Naive thymus-derived CD4-positive, alpha-beta T cell (primary cell): ENCODE measurements at regions of chr11 and their contacts with region 1.

Region 1: GRCh38 chr11:72430741-72431570 is 3.4 kb downstream of the CLPB start:
- DNase-seq: peak; percentile 16 to 61 (median 52)
- ATAC-seq: peak; percentile 25
- H3K4me3 ChIP-seq: no peak overlapping the region
- H3K4me3 Mint-ChIP-seq: peak overlapping the region in 9 of 10 donors; percentile 18 to 70 (median 57)
- H3K27ac ChIP-seq: no peak overlapping the region
- H3K27ac Mint-ChIP-seq: peak overlapping the region; percentile 6 to 84 (median 79)
- H3K4me1 ChIP-seq: peaks cover 12 to 13% of the 10 kb centered on the region in 2 donors
- H3K4me1 Mint-ChIP-seq: peaks cover 18 to 48% (median 40%) of the 10 kb centered on the region in 7 donors
- H3K27me3 ChIP-seq: no peaks in the 10 kb centered on the region
- H3K27me3 Mint-ChIP-seq: no peaks in the 10 kb centered on the region

Region 2: DNA sequence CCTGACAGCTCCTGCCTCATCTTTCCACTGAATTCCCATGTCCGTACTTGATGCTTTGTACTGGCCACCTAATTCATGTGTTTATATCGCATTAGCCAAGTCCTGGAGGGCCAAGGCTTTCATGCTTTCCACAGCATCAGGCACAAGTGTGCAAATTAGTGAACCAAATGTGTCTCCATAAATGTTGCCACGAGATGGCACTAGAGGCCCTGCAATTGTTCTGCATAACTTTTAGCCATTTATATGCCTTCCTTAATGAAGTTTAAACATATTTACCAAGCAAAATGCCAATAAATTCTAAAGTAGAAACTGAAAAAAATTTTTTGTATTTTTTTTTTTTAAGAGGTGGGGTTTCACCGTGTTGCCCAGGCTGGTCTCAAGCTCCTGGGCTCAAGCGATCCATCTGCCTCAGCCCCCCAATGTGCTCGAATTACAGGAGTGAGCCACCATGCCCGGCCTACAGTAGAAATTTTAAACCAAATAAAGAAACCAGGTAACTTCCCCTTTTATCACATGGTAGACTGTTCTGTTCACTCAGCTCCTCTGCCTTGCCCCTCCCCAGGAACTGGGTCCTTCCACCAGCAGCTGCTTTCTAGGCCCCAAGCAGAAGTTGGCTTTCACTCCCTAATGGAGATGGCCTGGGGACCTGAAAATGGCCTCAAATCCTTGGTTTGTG is 453.1 kb before region 1 on chr11:
- CTCF ChIA-PET with region 1: interaction called, 9 read pairs
- POLR2A ChIA-PET with region 1: no interaction called
- intact Hi-C with region 1: loop called (anchors 1 to 5 kb)
- DNase-seq: peak in 6 of 9 donors; percentile 44 to 55 (median 47)
- ATAC-seq: peak; percentile 74
- H3K4me3 ChIP-seq: no peak overlapping the region
- H3K4me3 Mint-ChIP-seq: no peak overlapping the region
- H3K27ac ChIP-seq: no peak overlapping the region
- H3K27ac Mint-ChIP-seq: no peak overlapping the region
- H3K4me1 ChIP-seq: no peaks in the 10 kb centered on the region
- H3K4me1 Mint-ChIP-seq: peaks cover 0 to 7% (median 0%) of the 10 kb centered on the region in 7 donors
- H3K27me3 ChIP-seq: no peaks in the 10 kb centered on the region
- H3K27me3 Mint-ChIP-seq: no peaks in the 10 kb centered on the region

Region 3: DNA sequence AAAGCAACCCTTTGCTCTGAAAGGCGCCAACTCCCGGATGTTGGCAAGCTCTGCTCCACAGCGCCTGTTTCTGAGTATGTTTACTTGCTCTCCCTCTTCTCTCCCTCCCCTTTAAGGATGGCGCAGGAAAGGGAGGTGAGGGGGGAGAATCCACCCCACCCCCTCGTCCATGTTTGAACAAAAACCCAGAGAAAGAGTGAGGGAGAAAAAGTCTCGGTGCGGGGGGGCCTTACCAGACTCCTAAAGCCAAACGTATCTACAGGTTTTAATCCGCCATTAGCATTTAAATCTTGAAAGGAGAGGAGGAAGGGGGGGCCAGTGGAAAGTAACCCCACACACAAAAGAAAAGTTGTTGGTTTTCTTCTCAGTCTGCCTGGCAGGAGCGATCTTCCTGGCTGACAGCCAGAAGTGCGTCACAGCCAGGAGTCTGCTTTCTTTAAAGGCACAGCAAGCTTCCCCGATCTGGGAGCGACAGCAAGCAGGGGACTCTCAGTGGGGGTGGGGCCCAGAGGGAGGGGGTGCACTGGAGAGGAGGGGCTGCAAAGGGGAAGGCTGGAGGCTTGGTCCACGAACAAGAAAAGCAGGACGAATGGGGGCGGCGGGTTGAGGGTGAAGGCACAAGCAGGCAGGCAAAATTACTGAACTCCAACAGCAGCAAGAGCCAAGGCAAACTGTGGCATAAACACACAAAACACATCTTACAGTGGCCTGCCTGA is 390.1 kb before region 1 on chr11:
- CTCF ChIA-PET with region 1: no interaction called
- POLR2A ChIA-PET with region 1: no interaction called
- intact Hi-C with region 1: loop called in 1 of 2 experiments (anchors 1 kb)
- DNase-seq: peak; percentile 51 to 91 (median 86)
- ATAC-seq: peak; percentile 84
- H3K4me3 ChIP-seq: peak overlapping the region; percentile 89
- H3K4me3 Mint-ChIP-seq: no peak overlapping the region
- H3K27ac ChIP-seq: peak overlapping the region; percentile 88
- H3K27ac Mint-ChIP-seq: no peak overlapping the region
- H3K4me1 ChIP-seq: peaks cover 48 to 57% of the 10 kb centered on the region in 2 donors
- H3K4me1 Mint-ChIP-seq: peaks cover 19 to 53% (median 41%) of the 10 kb centered on the region in 7 donors
- H3K27me3 ChIP-seq: no peaks in the 10 kb centered on the region
- H3K27me3 Mint-ChIP-seq: no peaks in the 10 kb centered on the region

Region 4: GRCh38 chr11:72112321-72113219 is 318.4 kb before region 1 on chr11 and contains the start of gene ANAPC15:
- CTCF ChIA-PET with region 1: no interaction called
- POLR2A ChIA-PET with region 1: interaction called, 3 read pairs
- intact Hi-C with region 1: loop called (anchors 1 kb)
- DNase-seq: peak; percentile 83 to 100 (median 99)
- ATAC-seq: peak; percentile 91
- H3K4me3 ChIP-seq: peak within 1 kb of the TSS; percentile 85
- H3K4me3 Mint-ChIP-seq: peak within 1 kb of the TSS; percentile 73 to 100 (median 96)
- H3K27ac ChIP-seq: peak within 1 kb of the TSS; percentile 92
- H3K27ac Mint-ChIP-seq: peak within 1 kb of the TSS; percentile 97 to 100 (median 98)
- H3K4me1 ChIP-seq: peaks cover 12 to 14% of the 10 kb centered on the region in 2 donors
- H3K4me1 Mint-ChIP-seq: peaks cover 12 to 29% (median 25%) of the 10 kb centered on the region in 7 donors
- H3K27me3 ChIP-seq: no peaks in the 10 kb centered on the region
- H3K27me3 Mint-ChIP-seq: peaks cover 0 to 6% (median 0%) of the 10 kb centered on the region in 5 donors
- total RNA-seq, gene ANAPC15: 43.0 to 59.6 (median 44.1) TPM

Region 5: GRCh38 chr11:72222907-72223614 is 207.9 kb before region 1 on chr11:
- CTCF ChIA-PET with region 1: no interaction called
- POLR2A ChIA-PET with region 1: interaction called, 7 read pairs
- intact Hi-C with region 1: loop called (anchors 1 kb)
- DNase-seq: peak; percentile 81 to 97 (median 90)
- ATAC-seq: peak; percentile 89
- H3K4me3 ChIP-seq: peak overlapping the region; percentile 77
- H3K4me3 Mint-ChIP-seq: peak overlapping the region; percentile 88 to 99 (median 91)
- H3K27ac ChIP-seq: peak overlapping the region; percentile 88
- H3K27ac Mint-ChIP-seq: peak overlapping the region; percentile 76 to 95 (median 89)
- H3K4me1 ChIP-seq: peaks cover 10 to 12% of the 10 kb centered on the region in 2 donors
- H3K4me1 Mint-ChIP-seq: peaks cover 12 to 31% (median 24%) of the 10 kb centered on the region in 7 donors
- H3K27me3 ChIP-seq: no peaks in the 10 kb centered on the region
- H3K27me3 Mint-ChIP-seq: peaks cover 0 to 8% (median 5%) of the 10 kb centered on the region in 5 donors

Region 6: DNA sequence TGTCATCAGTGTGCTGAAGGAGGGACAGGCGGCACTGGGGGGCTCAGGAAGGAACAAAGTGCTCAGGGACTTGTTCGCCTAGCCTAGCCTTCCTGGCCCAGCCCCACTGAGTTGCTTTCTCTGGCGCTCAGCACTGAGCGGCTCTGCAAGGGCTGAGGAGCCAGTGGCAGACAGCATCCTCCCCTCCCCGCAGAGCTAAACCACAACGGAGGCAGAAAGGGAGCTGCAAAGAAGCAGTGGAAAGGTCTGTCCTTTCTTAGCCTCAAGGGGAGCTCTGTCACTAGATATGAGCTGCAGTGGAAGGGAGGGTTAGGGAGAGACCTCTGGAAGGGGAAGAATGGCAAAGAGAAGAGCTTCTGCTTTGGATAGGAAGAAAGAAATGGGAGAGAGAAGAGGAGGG is 97.3 kb before region 1 on chr11:
- CTCF ChIA-PET with region 1: interaction called, 4 read pairs
- POLR2A ChIA-PET with region 1: no interaction called
- intact Hi-C with region 1: loop called (anchors 1 to 5 kb)
- DNase-seq: peak in 8 of 9 donors; percentile 50 to 69 (median 58)
- ATAC-seq: peak; percentile 83
- H3K4me3 ChIP-seq: no peak overlapping the region
- H3K4me3 Mint-ChIP-seq: peak overlapping the region in 6 of 10 donors; percentile 0 to 69 (median 42)
- H3K27ac ChIP-seq: no peak overlapping the region
- H3K27ac Mint-ChIP-seq: peak overlapping the region in 7 of 9 donors; percentile 1 to 89 (median 26)
- H3K4me1 ChIP-seq: peaks cover 0 to 7% of the 10 kb centered on the region in 2 donors
- H3K4me1 Mint-ChIP-seq: peaks cover 15 to 42% (median 30%) of the 10 kb centered on the region in 7 donors
- H3K27me3 ChIP-seq: no peaks in the 10 kb centered on the region
- H3K27me3 Mint-ChIP-seq: no peaks in the 10 kb centered on the region

Region 7: GRCh38 chr11:72793425-72794367 is 362.7 kb after region 1 on chr11 and contains the start of gene STARD10:
- CTCF ChIA-PET with region 1: interaction called, 3 read pairs
- POLR2A ChIA-PET with region 1: no interaction called
- intact Hi-C with region 1: loop called in 1 of 2 experiments (anchors 1 kb)
- DNase-seq: peak; percentile 90 to 97 (median 96)
- ATAC-seq: peak; percentile 97
- H3K4me3 ChIP-seq: peak within 1 kb of the TSS; percentile 89
- H3K4me3 Mint-ChIP-seq: peak within 1 kb of the TSS; percentile 78 to 100 (median 98)
- H3K27ac ChIP-seq: peak within 1 kb of the TSS; percentile 99
- H3K27ac Mint-ChIP-seq: peak within 1 kb of the TSS; percentile 99 to 100 (median 99)
- H3K4me1 ChIP-seq: peaks cover 16 to 18% of the 10 kb centered on the region in 2 donors
- H3K4me1 Mint-ChIP-seq: peaks cover 19 to 35% (median 28%) of the 10 kb centered on the region in 7 donors
- H3K27me3 ChIP-seq: no peaks in the 10 kb centered on the region
- H3K27me3 Mint-ChIP-seq: no peaks in the 10 kb centered on the region
- total RNA-seq, gene STARD10: 10.9 to 26.1 (median 16.4) TPM